GM13976 (cell line): ENCODE measurements at regions of chr2 and their contacts with region 1.

Region 1: DNA sequence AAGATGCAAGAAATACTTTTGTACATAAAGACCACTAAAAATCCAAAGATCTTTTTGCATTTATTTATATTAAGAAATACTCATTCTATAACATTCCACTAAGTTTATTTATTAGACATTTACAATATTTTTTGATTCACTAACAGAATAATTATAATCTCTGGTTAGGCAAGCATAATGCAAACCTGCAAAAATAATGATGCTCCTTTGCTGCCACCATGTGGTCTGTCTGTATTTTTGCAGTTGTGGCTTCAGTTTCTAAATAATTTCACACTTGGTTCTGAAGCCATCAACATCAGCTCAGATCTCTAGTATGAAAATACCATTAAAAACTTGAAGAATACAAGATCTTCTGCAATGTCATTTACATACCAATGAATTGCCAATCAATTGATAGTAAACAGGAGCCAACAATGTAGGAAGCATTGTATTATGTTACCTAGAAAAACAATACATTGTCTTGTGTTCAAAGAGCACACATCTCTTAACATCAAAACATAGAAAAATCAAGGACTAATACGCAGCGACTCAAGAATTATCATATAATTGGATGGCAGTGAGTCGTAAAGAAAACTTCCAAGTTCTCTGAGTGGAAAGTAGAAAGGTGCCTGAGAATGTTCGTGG is 28.8 kb upstream of the WDR75 start:
- DNase-seq: peak; percentile 34
- CTCF ChIP-seq: peak; percentile 53

Region 2: GRCh38 chr2:188524519-188525113 is 887.8 kb before region 1 on chr2:
- in situ Hi-C with region 1: loop called (anchors 25 kb)
- DNase-seq: peak; percentile 19
- CTCF ChIP-seq: peak; percentile 63

Region 3: GRCh38 chr2:189037518-189037917 is 374.9 kb before region 1 on chr2:
- in situ Hi-C with region 1: no loop called
- DNase-seq: no peak
- CTCF ChIP-seq: no peak

Region 4: DNA sequence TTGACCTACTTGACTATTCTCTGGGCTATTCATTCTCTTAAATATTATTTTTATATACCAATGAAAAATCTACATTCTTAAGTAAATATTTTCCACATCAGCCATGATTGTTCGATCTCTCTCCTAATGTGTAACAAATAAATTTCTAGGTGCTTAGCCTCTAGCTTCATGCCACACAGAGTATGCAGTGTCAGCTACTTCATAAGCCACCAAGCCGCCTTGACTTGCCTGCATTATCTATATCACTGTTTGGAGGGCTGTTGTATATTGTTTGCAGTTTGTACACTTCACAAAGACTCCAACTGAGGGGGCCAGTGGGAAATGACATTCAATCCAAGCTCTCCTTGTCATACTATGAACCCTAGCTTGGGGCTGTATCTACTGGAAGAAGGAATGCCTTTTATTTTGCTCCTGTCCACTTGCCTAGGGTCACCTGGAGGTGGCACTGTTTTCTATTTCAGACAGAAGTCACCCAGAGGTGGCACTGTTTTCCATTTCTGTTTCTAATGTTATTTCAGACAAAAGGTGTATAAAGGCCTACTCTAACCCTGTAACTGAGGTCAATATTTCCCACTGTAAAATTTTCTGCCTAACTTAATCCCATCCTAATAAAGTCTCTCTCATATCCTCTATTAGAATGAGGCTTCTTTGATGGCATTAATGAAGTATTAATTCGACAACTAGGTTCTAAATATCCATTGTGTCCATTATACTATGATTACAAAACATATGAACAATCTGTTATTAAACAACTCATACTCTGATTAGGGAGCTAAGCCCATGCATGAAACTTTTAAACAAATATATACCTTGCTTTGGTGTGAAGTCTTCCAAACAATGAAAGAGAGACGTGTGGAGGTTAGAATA is 269.3 kb before region 1 on chr2:
- in situ Hi-C with region 1: loop called (anchors 25 kb)
- DNase-seq: peak; percentile 28
- CTCF ChIP-seq: peak; percentile 85